Activated naive CD4-positive, alpha-beta T cell treated with anti-CD3 and anti-CD28 coated beads, Interleukin-2, amount 10 ng/mL, durations not matched to agents 7 days and 5 days (primary cell): ENCODE measurements at regions of chr1 and their contacts with region 1.

Region 1: DNA sequence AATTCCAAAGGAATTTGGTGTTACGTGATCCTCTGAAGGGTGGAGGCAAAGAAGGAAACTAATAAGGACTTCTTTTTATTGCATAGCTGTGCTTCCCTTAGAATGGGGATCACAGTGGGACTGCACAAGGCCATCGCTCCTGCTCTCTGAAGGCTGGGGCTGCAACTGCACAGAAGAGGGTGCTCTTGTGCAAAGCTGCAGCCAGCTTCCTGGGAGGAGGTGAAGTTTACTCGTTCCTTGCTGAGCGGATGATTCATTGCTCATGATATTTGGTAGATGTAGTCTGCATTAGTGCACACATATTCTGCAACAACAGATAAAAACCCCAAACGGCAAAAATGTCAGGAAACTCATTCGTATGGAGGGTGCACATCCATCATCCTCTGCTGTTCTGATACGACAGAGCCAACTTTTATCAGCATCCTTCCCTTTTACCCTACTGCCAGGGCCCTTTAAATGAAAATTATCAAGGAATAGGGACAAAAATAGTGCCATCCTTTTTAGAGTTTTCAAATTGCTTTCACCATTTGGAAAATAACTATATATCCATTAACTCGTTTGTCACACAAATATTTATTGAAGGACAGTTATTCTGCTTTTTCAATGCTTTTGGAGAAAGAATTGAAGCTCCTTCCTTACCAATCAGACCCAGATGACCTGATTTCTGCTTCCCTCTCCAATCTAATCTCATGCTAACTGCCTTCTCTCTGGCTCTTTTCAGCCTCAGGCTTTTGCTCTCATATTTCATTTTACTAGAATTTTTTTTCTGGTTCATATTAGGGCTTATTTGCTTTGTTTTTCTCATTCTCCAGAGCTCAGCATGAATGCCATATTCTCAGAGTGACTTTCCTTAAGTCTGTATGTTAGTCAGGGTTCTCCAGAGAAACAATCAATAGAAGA is 263.6 kb downstream of the DUSP10 start:
- DNase-seq: peak; percentile 64
- H3K4me3 Mint-ChIP-seq: no peak overlapping the region
- H3K27ac Mint-ChIP-seq: no peak overlapping the region
- H3K4me1 Mint-ChIP-seq: no peaks in the 10 kb centered on the region
- H3K27me3 Mint-ChIP-seq: peaks cover 8% of the 10 kb centered on the region

Region 2: GRCh38 chr1:222009105-222009730 is 530.9 kb after region 1 on chr1:
- CTCF ChIA-PET with region 1: interaction called, 16 read pairs
- DNase-seq: peak; percentile 48
- H3K4me3 Mint-ChIP-seq: no peak overlapping the region
- H3K27ac Mint-ChIP-seq: no peak overlapping the region
- H3K4me1 Mint-ChIP-seq: peaks cover 4% of the 10 kb centered on the region
- H3K27me3 Mint-ChIP-seq: peaks cover 8% of the 10 kb centered on the region